A673 (cell line): ENCODE measurements at regions of chr10 and their contacts with region 1.

Region 1: GRCh38 chr10:110279407-110279986 is 25.2 kb downstream of the SMNDC1 start:
- DNase-seq: peak; percentile 78
- H3K4me3 ChIP-seq: no peak overlapping the region
- H3K27ac ChIP-seq: no peak overlapping the region
- H3K4me1 ChIP-seq: peaks cover 8% of the 10 kb centered on the region
- H3K27me3 ChIP-seq: no peaks in the 10 kb centered on the region
- CTCF ChIP-seq: peak; percentile 83

Region 2: GRCh38 chr10:109883859-109884771 is 395.4 kb before region 1 on chr10:
- CTCF ChIA-PET with region 1: no interaction called
- POLR2A ChIA-PET with region 1: no interaction called
- intact Hi-C with region 1: loop called (anchors 2 kb)
- DNase-seq: peak; percentile 89
- H3K4me3 ChIP-seq: no peak overlapping the region
- H3K27ac ChIP-seq: no peak overlapping the region
- H3K4me1 ChIP-seq: peaks cover 4% of the 10 kb centered on the region
- H3K27me3 ChIP-seq: no peaks in the 10 kb centered on the region
- CTCF ChIP-seq: peak; percentile 95

Region 3: DNA sequence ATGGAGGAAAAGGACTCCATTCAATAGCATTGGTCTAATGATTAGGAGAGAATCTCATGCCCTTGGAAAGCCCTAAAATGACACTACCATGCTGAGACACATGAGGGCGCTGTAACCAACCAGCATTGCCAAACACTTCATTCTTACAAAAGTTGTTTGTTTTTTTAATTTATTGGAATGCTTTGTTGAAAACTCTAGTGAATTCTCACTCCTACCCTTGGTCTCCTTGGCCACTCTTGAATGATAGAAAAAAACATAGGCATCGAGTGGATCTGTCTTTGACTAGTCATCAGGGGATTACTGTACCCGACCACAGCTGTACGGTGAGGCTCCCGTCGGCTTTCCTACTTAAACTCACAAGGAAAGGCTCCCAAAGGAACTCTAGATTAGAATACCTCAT is 301.0 kb before region 1 on chr10:
- CTCF ChIA-PET with region 1: no interaction called
- POLR2A ChIA-PET with region 1: no interaction called
- intact Hi-C with region 1: loop called (anchors 10 kb)
- DNase-seq: peak; percentile 72
- H3K4me3 ChIP-seq: no peak overlapping the region
- H3K27ac ChIP-seq: no peak overlapping the region
- H3K4me1 ChIP-seq: peaks cover 12% of the 10 kb centered on the region
- H3K27me3 ChIP-seq: no peaks in the 10 kb centered on the region
- CTCF ChIP-seq: peak; percentile 93

Region 4: GRCh38 chr10:110137142-110137545 is 142.4 kb before region 1 on chr10:
- CTCF ChIA-PET with region 1: interaction called, 8 read pairs
- POLR2A ChIA-PET with region 1: no interaction called
- intact Hi-C with region 1: loop called (anchors 1 kb)
- DNase-seq: peak; percentile 81
- H3K4me3 ChIP-seq: no peak overlapping the region
- H3K27ac ChIP-seq: no peak overlapping the region
- H3K4me1 ChIP-seq: peaks cover 4% of the 10 kb centered on the region
- H3K27me3 ChIP-seq: no peaks in the 10 kb centered on the region
- CTCF ChIP-seq: peak; percentile 77

Region 5: DNA sequence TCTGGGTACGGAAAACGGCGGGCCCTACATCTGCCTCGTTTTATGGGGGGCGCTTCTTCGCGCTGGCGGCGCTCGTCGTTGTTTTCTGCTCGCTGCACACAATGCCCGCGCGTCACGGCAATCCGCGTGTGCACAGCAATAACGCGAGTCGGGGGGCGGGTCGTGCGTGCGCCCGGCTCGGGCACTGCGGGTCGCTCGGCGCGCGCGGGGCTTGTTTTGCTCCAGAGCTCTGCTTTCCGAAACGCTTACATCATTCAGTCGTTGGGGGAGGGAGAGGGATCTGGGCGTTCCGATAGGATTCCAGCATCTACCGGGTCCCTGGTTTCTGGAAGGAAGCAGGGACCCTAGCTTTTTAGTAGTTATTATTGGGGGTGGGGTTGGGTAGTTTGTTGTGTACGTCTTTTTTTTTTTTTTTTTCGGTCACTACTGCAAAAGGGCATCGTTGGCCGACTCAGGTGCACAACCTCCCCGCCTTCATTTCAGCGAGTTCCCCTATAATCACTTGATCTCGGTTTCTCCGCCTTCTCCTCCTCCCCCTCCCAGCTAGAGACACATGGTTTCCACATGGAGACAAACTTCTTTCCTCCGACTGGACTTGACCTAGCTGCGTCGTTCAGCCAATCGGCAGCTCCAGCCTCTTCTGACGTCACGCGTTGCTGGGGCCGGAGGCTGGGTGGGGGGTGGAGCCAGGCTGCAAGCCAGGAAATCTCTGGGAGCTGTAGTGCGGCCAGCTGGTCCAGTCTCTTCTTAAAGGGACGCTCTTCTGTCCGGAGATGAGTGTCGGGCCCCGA is 68.6 kb before region 1 on chr10:
- CTCF ChIA-PET with region 1: no interaction called
- POLR2A ChIA-PET with region 1: no interaction called
- intact Hi-C with region 1: loop called (anchors 2 kb)
- DNase-seq: peak; percentile 98
- H3K4me3 ChIP-seq: peak overlapping the region; percentile 92
- H3K27ac ChIP-seq: peak overlapping the region; percentile 89
- H3K4me1 ChIP-seq: peaks cover 11% of the 10 kb centered on the region
- H3K27me3 ChIP-seq: no peaks in the 10 kb centered on the region
- CTCF ChIP-seq: no peak

Region 6: DNA sequence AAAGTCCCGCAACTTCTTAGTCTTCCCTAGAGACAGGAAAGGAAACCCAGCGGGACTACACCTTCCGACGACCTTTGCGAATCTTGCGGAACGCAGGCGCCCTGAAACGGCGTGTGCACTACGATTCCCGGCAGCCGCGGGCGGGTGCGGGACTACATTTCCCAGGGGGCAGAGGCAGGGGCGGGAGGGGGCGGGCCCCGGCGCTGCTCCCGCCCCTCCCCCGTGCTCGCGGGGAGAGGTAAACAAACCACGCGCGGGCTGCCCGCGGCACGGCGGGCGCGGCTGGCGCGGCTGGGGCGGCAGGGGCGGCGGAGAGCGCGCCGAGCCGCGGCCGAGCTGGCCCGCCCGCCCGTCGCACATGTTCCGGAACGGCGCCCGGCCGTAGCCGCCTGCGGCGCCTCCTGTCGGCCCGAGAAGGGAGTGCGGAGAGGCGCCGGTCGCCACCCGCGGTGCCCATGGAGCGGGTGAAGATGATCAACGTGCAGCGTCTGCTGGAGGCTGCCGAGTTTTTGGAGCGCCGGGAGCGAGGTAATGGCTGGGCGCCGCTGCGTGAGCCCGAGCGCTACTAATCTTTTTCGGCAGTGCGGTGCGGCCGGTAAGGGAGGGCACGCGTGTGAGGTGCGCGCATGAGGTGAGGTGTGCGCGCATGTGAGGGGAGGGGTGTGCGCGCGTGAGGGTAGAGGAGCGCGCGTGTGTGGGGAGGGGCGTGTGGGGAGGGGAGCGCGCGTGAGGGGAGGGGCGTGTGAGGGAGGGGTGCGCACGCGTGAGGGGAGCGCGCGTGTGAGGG is 53.5 kb before region 1 on chr10:
- CTCF ChIA-PET with region 1: no interaction called
- POLR2A ChIA-PET with region 1: no interaction called
- intact Hi-C with region 1: loop called (anchors 5 kb)
- DNase-seq: peak; percentile 97
- H3K4me3 ChIP-seq: peak overlapping the region; percentile 73
- H3K27ac ChIP-seq: peak overlapping the region; percentile 70
- H3K4me1 ChIP-seq: peaks cover 20% of the 10 kb centered on the region
- H3K27me3 ChIP-seq: no peaks in the 10 kb centered on the region
- CTCF ChIP-seq: peak; percentile 55